Heart left ventricle (tissue), 16 donors: ENCODE measurements at regions of chr4 and their contacts with region 1.

Region 1: DNA sequence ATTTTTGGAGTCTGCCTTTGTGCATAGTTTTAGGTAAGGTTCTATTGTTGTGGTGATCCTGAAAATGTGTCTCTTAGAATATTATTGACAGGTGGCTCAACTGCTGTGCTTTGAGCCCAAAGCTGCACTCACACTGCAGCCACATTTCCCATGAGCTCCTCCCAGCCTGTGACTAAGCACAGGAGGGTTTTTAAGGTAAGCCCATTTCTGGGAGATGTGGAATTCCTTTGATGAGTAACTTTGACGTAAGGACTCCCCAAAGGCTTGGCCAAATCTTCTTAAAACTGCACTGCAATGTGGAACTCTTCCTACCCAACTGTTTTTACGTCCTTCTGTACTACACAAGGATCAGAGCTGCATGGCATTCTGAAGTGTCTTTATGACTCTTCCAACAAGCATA is 20.0 kb upstream of the TMPRSS11A start:
- DNase-seq: no peak
- ATAC-seq: no peak
- H3K4me3 ChIP-seq: no peak overlapping the region
- H3K27ac ChIP-seq: no peak overlapping the region
- H3K4me1 ChIP-seq: no peaks in the 10 kb centered on the region
- H3K27me3 ChIP-seq: no peaks in the 10 kb centered on the region
- CTCF ChIP-seq: no peak
- POLR2A ChIP-seq: no peak

Region 2: DNA sequence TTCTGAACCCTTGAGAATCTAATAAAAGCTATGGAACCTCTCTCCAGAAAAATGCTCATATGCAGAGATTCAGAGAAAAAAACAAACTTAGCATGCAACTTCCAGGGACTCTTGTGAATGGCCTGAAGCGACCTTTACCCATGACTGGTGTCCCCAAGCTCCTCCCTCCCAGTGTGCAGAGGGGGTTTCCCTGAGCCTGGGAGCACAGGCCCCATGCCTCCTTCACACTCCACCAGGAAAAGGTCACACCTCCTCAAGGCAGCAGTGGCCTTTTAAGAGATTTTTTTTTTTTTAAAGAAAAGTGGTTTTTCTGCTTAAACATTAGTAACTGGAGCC is 269.1 kb before region 1 on chr4:
- intact Hi-C with region 1: no loop called
- DNase-seq: no peak
- ATAC-seq: no peak
- H3K4me3 ChIP-seq: no peak overlapping the region
- H3K27ac ChIP-seq: no peak overlapping the region
- H3K4me1 ChIP-seq: peaks cover 0 to 18% (median 1%) of the 10 kb centered on the region in 12 donors
- H3K27me3 ChIP-seq: no peaks in the 10 kb centered on the region
- CTCF ChIP-seq: no peak
- POLR2A ChIP-seq: no peak

Region 3: DNA sequence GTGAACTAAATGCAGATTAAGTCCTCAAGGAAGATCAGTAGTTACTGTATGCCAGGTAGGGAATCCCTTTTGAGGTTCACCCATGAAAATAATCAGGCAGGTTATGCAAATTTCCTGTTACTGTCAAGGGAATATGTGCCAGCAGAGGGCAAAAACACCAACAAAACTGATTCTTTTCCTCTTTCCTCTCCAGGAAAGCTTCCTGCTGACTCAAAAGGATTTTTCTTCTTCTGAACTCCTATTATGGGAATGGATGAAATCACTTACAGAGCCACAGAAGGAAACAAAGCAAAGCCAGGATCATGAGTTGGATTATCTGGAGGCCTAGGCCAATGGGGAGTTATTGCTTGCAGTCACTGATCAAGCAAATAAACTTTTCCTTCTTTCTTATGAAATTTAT is 96.6 kb after region 1 on chr4:
- intact Hi-C with region 1: no loop called
- DNase-seq: no peak
- ATAC-seq: no peak
- H3K4me3 ChIP-seq: no peak overlapping the region
- H3K27ac ChIP-seq: no peak overlapping the region
- H3K4me1 ChIP-seq: no peaks in the 10 kb centered on the region
- H3K27me3 ChIP-seq: no peaks in the 10 kb centered on the region
- CTCF ChIP-seq: no peak
- POLR2A ChIP-seq: no peak

Region 4: DNA sequence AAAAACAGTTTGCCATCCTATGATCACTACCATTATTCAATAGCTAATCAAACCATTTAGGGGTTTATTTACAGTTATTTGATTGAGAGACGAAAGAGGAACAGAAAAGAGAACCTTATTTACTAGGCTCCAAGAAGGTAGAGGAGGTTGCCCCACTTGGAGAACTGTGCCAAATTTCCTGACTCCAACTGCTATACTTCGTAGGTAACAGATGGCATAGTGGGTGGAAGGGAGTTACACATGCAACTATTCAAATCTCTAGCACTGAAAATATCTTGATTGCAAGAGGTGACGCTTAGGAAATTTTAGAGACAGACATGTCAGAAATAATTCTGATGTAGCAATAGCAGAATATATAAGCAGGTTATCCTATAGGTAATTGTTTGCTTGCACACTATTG is 184.4 kb after region 1 on chr4:
- intact Hi-C with region 1: loop called in 3 of 10 experiments (anchors 10 kb)
- DNase-seq: no peak
- ATAC-seq: no peak
- H3K4me3 ChIP-seq: no peak overlapping the region
- H3K27ac ChIP-seq: no peak overlapping the region
- H3K4me1 ChIP-seq: no peaks in the 10 kb centered on the region
- H3K27me3 ChIP-seq: no peaks in the 10 kb centered on the region
- CTCF ChIP-seq: no peak
- POLR2A ChIP-seq: no peak

Region 5: GRCh38 chr4:68655764-68656444 is 672.6 kb after region 1 on chr4:
- intact Hi-C with region 1: no loop called
- DNase-seq: no peak
- ATAC-seq: no peak
- H3K4me3 ChIP-seq: no peak overlapping the region
- H3K27ac ChIP-seq: no peak overlapping the region
- H3K4me1 ChIP-seq: no peaks in the 10 kb centered on the region
- H3K27me3 ChIP-seq: no peaks in the 10 kb centered on the region
- CTCF ChIP-seq: no peak
- POLR2A ChIP-seq: no peak